CD4-positive, alpha-beta memory T cell (primary cell): ENCODE measurements at regions of chr4 and their contacts with region 1.

Region 1: GRCh38 chr4:88514557-88515511 is 8.7 kb downstream of the PYURF start:
- DNase-seq: no peak
- H3K4me3 ChIP-seq: no peak overlapping the region
- H3K4me3 Mint-ChIP-seq: no peak overlapping the region
- H3K27ac ChIP-seq: no peak overlapping the region
- H3K27ac Mint-ChIP-seq: no peak overlapping the region
- H3K4me1 ChIP-seq: no peaks in the 10 kb centered on the region
- H3K4me1 Mint-ChIP-seq: no peaks in the 10 kb centered on the region
- H3K27me3 ChIP-seq: no peaks in the 10 kb centered on the region
- H3K27me3 Mint-ChIP-seq: peaks cover 0 to 4% of the 10 kb centered on the region in 2 donors

Region 2: DNA sequence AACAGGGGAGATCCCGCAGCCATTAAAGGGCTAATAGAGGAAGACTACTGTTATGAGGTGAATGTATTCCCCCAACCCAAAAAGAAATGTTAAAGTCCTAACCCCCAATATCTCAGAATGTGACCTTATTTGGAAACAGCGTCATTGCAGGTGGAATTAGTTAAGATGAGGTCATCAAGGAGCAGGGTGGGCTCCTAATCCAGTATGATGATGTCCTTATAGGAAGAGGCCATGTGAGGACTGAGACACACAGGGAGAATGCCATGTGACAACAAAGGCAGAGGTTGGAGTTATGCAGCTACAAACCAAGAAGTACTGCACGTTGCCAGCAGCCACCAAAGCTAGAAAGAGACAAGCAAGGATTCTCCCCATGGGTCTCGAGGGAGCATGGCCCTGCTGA is 525.1 kb before region 1 on chr4:
- CTCF ChIA-PET with region 1: no interaction called
- POLR2A ChIA-PET with region 1: no interaction called
- intact Hi-C with region 1: no loop called
- DNase-seq: no peak
- H3K4me3 ChIP-seq: no peak overlapping the region
- H3K4me3 Mint-ChIP-seq: no peak overlapping the region
- H3K27ac ChIP-seq: no peak overlapping the region
- H3K27ac Mint-ChIP-seq: no peak overlapping the region
- H3K4me1 ChIP-seq: peaks cover 3% of the 10 kb centered on the region
- H3K4me1 Mint-ChIP-seq: peaks cover 0 to 18% (median 12%) of the 10 kb centered on the region in 4 donors
- H3K27me3 ChIP-seq: no peaks in the 10 kb centered on the region
- H3K27me3 Mint-ChIP-seq: peaks cover 5 to 9% of the 10 kb centered on the region in 2 donors

Region 3: DNA sequence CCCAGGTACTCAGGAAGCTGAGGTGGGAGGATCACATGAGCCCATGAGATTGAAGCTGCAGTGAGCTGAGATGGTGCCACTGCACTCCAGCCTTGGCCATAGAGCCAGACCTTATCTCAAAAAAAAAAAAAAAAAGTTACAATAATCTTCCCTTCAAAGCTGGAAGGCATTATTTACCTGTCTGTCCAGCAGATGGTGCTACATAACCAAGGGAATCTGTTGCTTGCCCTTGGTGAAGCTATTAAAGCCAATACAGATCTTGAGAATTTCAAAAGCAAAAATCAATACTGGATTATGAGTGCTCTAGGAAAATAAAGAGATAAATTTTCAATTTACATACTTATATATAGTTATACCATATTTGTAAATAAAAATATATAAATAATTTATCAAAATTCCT is 481.5 kb before region 1 on chr4:
- CTCF ChIA-PET with region 1: interaction called, 16 read pairs
- POLR2A ChIA-PET with region 1: no interaction called
- intact Hi-C with region 1: loop called (anchors 1 kb)
- DNase-seq: peak; percentile 32 to 55 (median 45)
- H3K4me3 ChIP-seq: no peak overlapping the region
- H3K4me3 Mint-ChIP-seq: no peak overlapping the region
- H3K27ac ChIP-seq: no peak overlapping the region
- H3K27ac Mint-ChIP-seq: no peak overlapping the region
- H3K4me1 ChIP-seq: no peaks in the 10 kb centered on the region
- H3K4me1 Mint-ChIP-seq: no peaks in the 10 kb centered on the region
- H3K27me3 ChIP-seq: no peaks in the 10 kb centered on the region
- H3K27me3 Mint-ChIP-seq: no peaks in the 10 kb centered on the region

Region 4: GRCh38 chr4:88225232-88226105 is 289.4 kb before region 1 on chr4:
- CTCF ChIA-PET with region 1: interaction called, 469 read pairs
- POLR2A ChIA-PET with region 1: no interaction called
- intact Hi-C with region 1: no loop called
- DNase-seq: no peak
- H3K4me3 ChIP-seq: no peak overlapping the region
- H3K4me3 Mint-ChIP-seq: no peak overlapping the region
- H3K27ac ChIP-seq: no peak overlapping the region
- H3K27ac Mint-ChIP-seq: peak overlapping the region in 1 of 7 donors; percentile 80
- H3K4me1 ChIP-seq: peaks cover 2% of the 10 kb centered on the region
- H3K4me1 Mint-ChIP-seq: peaks cover 2 to 3% (median 2%) of the 10 kb centered on the region in 4 donors
- H3K27me3 ChIP-seq: no peaks in the 10 kb centered on the region
- H3K27me3 Mint-ChIP-seq: no peaks in the 10 kb centered on the region

Region 5: GRCh38 chr4:88366460-88366859 is 148.4 kb before region 1 on chr4:
- CTCF ChIA-PET with region 1: interaction called, 83 read pairs
- POLR2A ChIA-PET with region 1: no interaction called
- intact Hi-C with region 1: loop called (anchors 1 kb)
- DNase-seq: no peak
- H3K4me3 ChIP-seq: no peak overlapping the region
- H3K4me3 Mint-ChIP-seq: no peak overlapping the region
- H3K27ac ChIP-seq: no peak overlapping the region
- H3K27ac Mint-ChIP-seq: no peak overlapping the region
- H3K4me1 ChIP-seq: no peaks in the 10 kb centered on the region
- H3K4me1 Mint-ChIP-seq: peaks cover 0 to 3% (median 0%) of the 10 kb centered on the region in 4 donors
- H3K27me3 ChIP-seq: no peaks in the 10 kb centered on the region
- H3K27me3 Mint-ChIP-seq: peaks cover 0 to 10% of the 10 kb centered on the region in 2 donors

Region 6: DNA sequence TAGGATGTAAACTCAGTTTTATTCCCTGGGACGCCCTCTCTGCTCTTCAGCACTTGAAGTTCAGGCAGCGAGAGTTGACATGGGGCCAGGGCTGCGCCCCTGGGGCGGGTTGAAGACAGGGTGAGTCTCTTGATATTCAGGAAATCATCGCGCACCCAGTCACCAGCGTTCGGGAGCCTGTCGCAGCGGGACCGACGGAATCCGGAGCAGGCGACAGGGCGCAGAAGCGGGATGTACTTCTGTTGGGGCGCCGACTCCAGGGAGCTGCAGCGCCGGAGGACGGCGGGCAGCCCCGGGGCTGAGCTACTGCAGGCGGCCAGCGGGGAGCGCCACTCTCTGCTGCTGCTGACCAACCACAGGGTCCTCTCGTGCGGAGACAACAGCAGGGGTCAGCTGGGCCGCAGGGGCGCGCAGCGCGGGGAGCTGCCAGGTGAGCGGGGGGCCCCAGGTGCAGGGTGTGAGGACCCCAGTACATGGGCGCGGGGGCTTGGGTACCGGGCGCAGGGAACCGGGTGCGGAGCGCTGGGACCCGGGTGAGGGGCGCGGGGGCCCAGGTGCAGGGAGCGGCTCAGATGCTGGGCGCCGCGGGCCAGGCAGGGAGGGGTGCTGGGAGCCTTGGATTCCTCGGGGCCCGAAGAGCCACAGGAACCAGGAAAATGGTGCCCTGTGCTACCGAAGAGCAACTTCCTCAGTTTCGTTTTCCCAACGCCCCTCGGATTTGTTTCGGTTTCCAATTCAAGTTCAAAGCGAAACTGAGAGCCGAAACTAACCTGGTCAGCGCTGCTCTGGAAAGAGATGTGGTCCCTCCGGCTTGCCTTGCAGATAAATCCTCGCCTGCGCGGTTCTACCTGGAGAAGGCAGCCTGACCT is 135.9 kb before region 1 on chr4 and contains the start of gene HERC6:
- CTCF ChIA-PET with region 1: interaction called, 17 read pairs
- POLR2A ChIA-PET with region 1: no interaction called
- intact Hi-C with region 1: no loop called
- DNase-seq: peak; percentile 74 to 89 (median 80)
- H3K4me3 ChIP-seq: peak within 1 kb of the TSS; percentile 82 to 96
- H3K4me3 Mint-ChIP-seq: peak within 1 kb of the TSS; percentile 95 to 99 (median 97)
- H3K27ac ChIP-seq: peak within 1 kb of the TSS; percentile 86
- H3K27ac Mint-ChIP-seq: peak within 1 kb of the TSS; percentile 94 to 98 (median 97)
- H3K4me1 ChIP-seq: peaks cover 37% of the 10 kb centered on the region
- H3K4me1 Mint-ChIP-seq: peaks cover 37 to 54% (median 43%) of the 10 kb centered on the region in 4 donors
- H3K27me3 ChIP-seq: no peaks in the 10 kb centered on the region
- H3K27me3 Mint-ChIP-seq: no peaks in the 10 kb centered on the region
- total RNA-seq, gene HERC6: 26.8 to 29.5 TPM

Region 7: GRCh38 chr4:88456757-88457306 is 58.0 kb before region 1 on chr4 and contains the start of gene HERC5:
- CTCF ChIA-PET with region 1: interaction called, 14 read pairs
- POLR2A ChIA-PET with region 1: interaction called, 5 read pairs
- intact Hi-C with region 1: no loop called
- DNase-seq: peak; percentile 92 to 96 (median 95)
- H3K4me3 ChIP-seq: peak within 1 kb of the TSS; percentile 76 to 96
- H3K4me3 Mint-ChIP-seq: peak within 1 kb of the TSS; percentile 96 to 100 (median 100)
- H3K27ac ChIP-seq: peak within 1 kb of the TSS; percentile 71
- H3K27ac Mint-ChIP-seq: peak within 1 kb of the TSS; percentile 89 to 100 (median 100)
- H3K4me1 ChIP-seq: peaks cover 28% of the 10 kb centered on the region
- H3K4me1 Mint-ChIP-seq: peaks cover 21 to 37% (median 28%) of the 10 kb centered on the region in 4 donors
- H3K27me3 ChIP-seq: no peaks in the 10 kb centered on the region
- H3K27me3 Mint-ChIP-seq: no peaks in the 10 kb centered on the region
- total RNA-seq, gene HERC5: 18.6 to 22.1 TPM

Region 8: DNA sequence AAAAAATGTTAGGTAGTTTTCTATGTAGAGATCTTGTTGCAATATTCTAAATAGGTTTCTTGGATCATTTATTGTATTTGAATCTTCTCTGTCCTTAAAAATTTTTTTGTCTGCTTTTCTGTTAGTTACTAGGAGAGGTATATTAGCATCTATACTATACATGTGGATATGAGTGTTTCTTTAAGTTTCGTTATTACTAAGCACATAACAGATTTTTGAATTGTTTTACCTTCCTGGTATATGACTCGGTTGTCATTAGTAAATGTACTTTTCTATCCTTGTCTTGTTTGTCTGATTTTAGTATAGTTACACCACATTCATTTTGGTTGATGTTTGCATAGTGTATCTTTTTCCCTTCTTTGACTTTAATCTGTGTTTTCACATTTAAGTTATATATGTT is 11.5 kb before region 1 on chr4:
- CTCF ChIA-PET with region 1: interaction called, 37 read pairs
- POLR2A ChIA-PET with region 1: no interaction called
- intact Hi-C with region 1: no loop called
- DNase-seq: no peak
- H3K4me3 ChIP-seq: no peak overlapping the region
- H3K4me3 Mint-ChIP-seq: no peak overlapping the region
- H3K27ac ChIP-seq: no peak overlapping the region
- H3K27ac Mint-ChIP-seq: no peak overlapping the region
- H3K4me1 ChIP-seq: no peaks in the 10 kb centered on the region
- H3K4me1 Mint-ChIP-seq: no peaks in the 10 kb centered on the region
- H3K27me3 ChIP-seq: no peaks in the 10 kb centered on the region
- H3K27me3 Mint-ChIP-seq: no peaks in the 10 kb centered on the region

Region 9: GRCh38 chr4:88858752-88859151 is 343.9 kb after region 1 on chr4:
- CTCF ChIA-PET with region 1: no interaction called
- POLR2A ChIA-PET with region 1: no interaction called
- intact Hi-C with region 1: no loop called
- DNase-seq: no peak
- H3K4me3 ChIP-seq: no peak overlapping the region
- H3K4me3 Mint-ChIP-seq: no peak overlapping the region
- H3K27ac ChIP-seq: no peak overlapping the region
- H3K27ac Mint-ChIP-seq: no peak overlapping the region
- H3K4me1 ChIP-seq: no peaks in the 10 kb centered on the region
- H3K4me1 Mint-ChIP-seq: peaks cover 0 to 4% (median 0%) of the 10 kb centered on the region in 4 donors
- H3K27me3 ChIP-seq: no peaks in the 10 kb centered on the region
- H3K27me3 Mint-ChIP-seq: no peaks in the 10 kb centered on the region